ENCODE measurements at regions of chr13 and their contacts with region 1.

Region 1: DNA sequence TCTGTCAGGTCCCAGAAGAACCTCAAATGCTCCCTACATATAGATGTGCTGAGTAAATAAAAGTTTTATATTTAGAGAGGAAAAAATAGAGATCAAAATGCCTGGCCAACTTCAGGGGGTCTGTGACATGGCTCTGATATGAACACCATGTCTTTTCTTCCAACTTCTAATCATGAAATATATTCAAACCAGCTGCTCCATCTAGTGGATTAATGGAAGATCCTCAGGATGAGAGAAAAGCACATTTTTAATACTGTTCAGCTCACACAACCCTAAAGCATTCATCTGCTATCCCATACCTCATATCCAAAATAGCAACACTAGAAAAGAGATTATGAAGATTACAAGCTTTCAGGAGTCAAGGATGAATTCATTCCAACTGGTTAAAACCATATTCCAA is 56.0 kb upstream of the DOCK9 start:
- DNase-seq: no peak
- ATAC-seq: peak; percentile 63 to 80 (median 68)
- H3K4me3 ChIP-seq: no peak overlapping the region
- H3K27ac ChIP-seq: peak overlapping the region in 1 of 12 donors; percentile 12
- H3K4me1 ChIP-seq: peaks cover 0 to 20% (median 0%) of the 10 kb centered on the region in 12 donors
- H3K27me3 ChIP-seq: peaks cover 0 to 37% (median 0%) of the 10 kb centered on the region in 9 donors
- CTCF ChIP-seq: peak; percentile 43 to 75 (median 64)
- POLR2A ChIP-seq: no peak

Region 2: DNA sequence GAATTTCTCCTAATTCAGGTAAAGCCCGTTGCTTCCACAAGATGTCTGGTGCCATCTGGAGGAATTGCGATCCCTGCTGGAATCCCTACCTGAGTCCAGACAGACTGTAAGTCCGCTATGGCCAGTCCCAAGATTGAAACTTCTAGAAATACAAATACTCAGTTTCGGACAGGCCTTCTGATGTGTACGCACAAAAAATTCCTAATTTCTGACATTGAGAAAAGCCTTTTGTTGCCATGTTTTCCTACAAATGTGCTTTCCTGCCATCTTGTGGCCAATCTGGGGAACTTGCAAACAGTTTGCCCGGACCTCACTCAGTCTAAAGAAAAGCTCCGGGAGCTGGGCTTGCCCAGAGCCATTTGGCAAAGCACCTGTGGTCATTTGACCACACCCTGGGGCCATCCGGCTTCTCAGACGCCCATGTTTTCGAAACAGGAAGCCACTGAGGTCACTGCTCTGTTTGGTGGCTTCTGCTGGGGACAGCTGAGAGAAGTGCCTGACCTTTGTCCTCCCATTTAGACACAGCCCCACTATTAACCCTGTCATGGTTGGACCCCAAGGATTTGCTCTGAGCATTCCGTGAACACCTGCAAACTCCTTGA is 360.8 kb before region 1 on chr13:
- intact Hi-C with region 1: loop called in 1 of 10 experiments (anchors 5 kb)
- DNase-seq: peak; percentile 66 to 74 (median 70)
- ATAC-seq: peak; percentile 66 to 96 (median 92)
- H3K4me3 ChIP-seq: peak overlapping the region in 1 of 12 donors; percentile 14
- H3K27ac ChIP-seq: peak overlapping the region in 1 of 12 donors; percentile 1
- H3K4me1 ChIP-seq: peaks cover 0 to 15% (median 7%) of the 10 kb centered on the region in 12 donors
- H3K27me3 ChIP-seq: no peaks in the 10 kb centered on the region
- CTCF ChIP-seq: peak; percentile 82 to 96 (median 88)
- POLR2A ChIP-seq: no peak

Region 3: DNA sequence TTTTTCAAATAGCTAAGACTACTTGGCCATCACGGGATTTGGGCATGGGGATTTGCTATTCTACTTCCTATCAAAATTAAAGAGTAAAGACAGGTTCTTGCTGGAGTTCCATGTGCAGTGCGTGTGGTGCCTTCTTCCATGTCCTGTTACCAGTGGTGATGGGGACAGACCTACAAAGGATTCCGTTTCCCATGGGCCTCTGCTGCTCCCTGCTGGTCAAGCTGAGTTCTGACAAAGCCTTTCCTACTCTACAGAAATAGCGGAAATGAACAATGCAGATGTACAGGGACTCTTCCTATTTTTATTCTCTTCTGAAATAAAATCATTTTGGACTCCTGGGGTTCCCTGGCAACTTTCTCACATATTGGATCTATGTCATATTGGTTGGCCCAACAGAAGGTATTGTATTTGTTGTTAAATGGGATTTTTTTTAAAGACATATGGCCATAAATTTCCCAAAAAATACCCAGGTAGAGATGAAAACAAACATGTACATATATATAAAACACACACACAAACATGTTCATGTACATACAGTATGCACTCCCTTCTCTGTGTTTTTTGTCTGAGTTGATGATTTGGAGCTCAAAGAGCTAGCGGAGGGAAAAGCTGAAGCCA is 190.8 kb before region 1 on chr13:
- intact Hi-C with region 1: loop called in 9 of 10 experiments (anchors 5 to 10 kb)
- DNase-seq: peak; percentile 65 to 82 (median 72)
- ATAC-seq: peak; percentile 75 to 87 (median 84)
- H3K4me3 ChIP-seq: no peak overlapping the region
- H3K27ac ChIP-seq: no peak overlapping the region
- H3K4me1 ChIP-seq: peaks cover 0 to 14% (median 0%) of the 10 kb centered on the region in 12 donors
- H3K27me3 ChIP-seq: no peaks in the 10 kb centered on the region
- CTCF ChIP-seq: peak; percentile 79 to 90 (median 83)
- POLR2A ChIP-seq: no peak

Region 4: GRCh38 chr13:98869408-98870090 is 164.3 kb before region 1 on chr13:
- intact Hi-C with region 1: loop called in 1 of 10 experiments (anchors 10 kb)
- DNase-seq: peak in 4 of 5 donors; percentile 29 to 40 (median 33)
- ATAC-seq: peak in 3 of 4 donors; percentile 64 to 68 (median 65)
- H3K4me3 ChIP-seq: no peak overlapping the region
- H3K27ac ChIP-seq: no peak overlapping the region
- H3K4me1 ChIP-seq: peaks cover 0 to 5% (median 0%) of the 10 kb centered on the region in 12 donors
- H3K27me3 ChIP-seq: no peaks in the 10 kb centered on the region
- CTCF ChIP-seq: peak in 5 of 12 donors; percentile 7 to 29 (median 22)
- POLR2A ChIP-seq: no peak

Region 5: DNA sequence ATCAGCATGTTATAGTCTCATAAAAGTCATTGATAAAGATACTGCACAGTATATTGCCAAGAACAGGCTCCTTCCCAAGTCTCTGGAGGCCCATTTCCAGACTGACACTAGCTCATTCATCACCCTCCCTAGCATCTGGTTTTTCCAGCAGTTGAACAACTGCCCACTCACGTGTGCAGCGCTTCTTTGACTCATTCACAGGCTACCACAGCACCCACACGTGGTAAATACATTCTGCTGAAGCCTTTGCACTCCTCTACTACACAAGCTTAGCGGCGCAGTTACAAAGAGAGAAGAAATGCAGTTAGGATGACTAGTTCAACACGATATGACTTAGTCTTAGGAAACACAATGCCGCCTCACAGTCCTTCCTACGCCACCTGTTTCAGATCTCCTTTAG is 143.6 kb before region 1 on chr13:
- intact Hi-C with region 1: loop called in 8 of 10 experiments (anchors 2 to 10 kb)
- DNase-seq: peak in 1 of 5 donors; percentile 33
- ATAC-seq: peak; percentile 28 to 88 (median 68)
- H3K4me3 ChIP-seq: no peak overlapping the region
- H3K27ac ChIP-seq: peak overlapping the region in 1 of 12 donors; percentile 34
- H3K4me1 ChIP-seq: peaks cover 0 to 25% (median 11%) of the 10 kb centered on the region in 12 donors
- H3K27me3 ChIP-seq: no peaks in the 10 kb centered on the region
- CTCF ChIP-seq: no peak
- POLR2A ChIP-seq: no peak

Region 6: DNA sequence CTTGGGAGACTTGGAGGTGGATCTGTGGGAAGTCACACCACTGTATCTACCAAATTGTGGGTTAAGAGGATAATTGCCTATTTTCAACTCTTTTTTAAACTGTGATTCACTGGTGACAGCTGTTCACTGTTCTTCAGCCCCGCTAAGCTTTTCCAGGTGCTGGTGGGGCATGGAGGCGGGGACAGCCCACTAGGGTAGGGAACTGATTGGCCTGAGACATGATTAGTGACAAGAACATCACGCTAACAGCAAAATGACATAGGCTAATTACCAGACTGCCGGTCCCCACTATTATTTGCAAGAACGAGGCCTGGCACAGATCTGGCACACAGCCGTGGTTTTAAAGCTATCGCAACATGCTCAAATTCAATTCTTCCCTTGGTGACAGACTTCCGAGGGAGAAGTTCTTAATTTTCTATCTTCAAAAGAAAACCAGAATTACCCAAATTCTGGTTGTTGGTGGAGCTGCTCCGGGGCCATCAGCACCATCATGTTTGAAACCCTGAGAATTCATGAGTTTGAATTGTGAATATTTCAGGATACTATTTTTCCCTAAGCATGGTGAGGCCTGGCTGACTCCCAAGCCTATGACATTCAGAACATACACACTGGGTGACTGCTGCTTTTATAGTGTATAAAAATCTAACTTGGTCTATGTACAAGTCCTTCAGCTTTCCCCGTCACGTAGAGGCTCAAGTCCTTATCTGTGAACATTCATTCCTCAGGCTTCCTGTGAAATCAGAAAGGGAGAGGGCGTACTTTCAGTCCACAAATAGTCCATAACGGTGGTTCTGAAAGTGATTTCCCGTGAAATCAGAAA is 73.8 kb before region 1 on chr13:
- intact Hi-C with region 1: no loop called
- DNase-seq: no peak
- ATAC-seq: peak; percentile 49 to 80 (median 58)
- H3K4me3 ChIP-seq: no peak overlapping the region
- H3K27ac ChIP-seq: peak overlapping the region; percentile 32 to 80 (median 65)
- H3K4me1 ChIP-seq: peaks cover 21 to 71% (median 56%) of the 10 kb centered on the region in 12 donors
- H3K27me3 ChIP-seq: no peaks in the 10 kb centered on the region
- CTCF ChIP-seq: peak in 2 of 12 donors; percentile 12 to 17
- POLR2A ChIP-seq: no peak

Region 7: GRCh38 chr13:98977568-98978265 is 56.1 kb before region 1 on chr13 and contains the start of gene DOCK9:
- intact Hi-C with region 1: loop called in 4 of 10 experiments (anchors 2 to 5 kb)
- DNase-seq: peak; percentile 74 to 81 (median 78)
- ATAC-seq: peak; percentile 93 to 98 (median 96)
- H3K4me3 ChIP-seq: peak within 1 kb of the TSS; percentile 18 to 76 (median 57)
- H3K27ac ChIP-seq: peak within 1 kb of the TSS; percentile 50 to 84 (median 74)
- H3K4me1 ChIP-seq: peaks cover 0 to 71% (median 27%) of the 10 kb centered on the region in 12 donors
- H3K27me3 ChIP-seq: peaks cover 0 to 13% (median 0%) of the 10 kb centered on the region in 9 donors
- CTCF ChIP-seq: no peak
- POLR2A ChIP-seq: peak in 1 of 2 donors; percentile 84
- total RNA-seq, gene DOCK9: 35.0 to 128 (median 45.2) TPM

Region 8: GRCh38 chr13:99087096-99087953 is 53.5 kb after region 1 on chr13:
- intact Hi-C with region 1: no loop called
- DNase-seq: peak; percentile 92 to 95 (median 92)
- ATAC-seq: peak; percentile 95 to 99 (median 98)
- H3K4me3 ChIP-seq: peak overlapping the region; percentile 72 to 93 (median 87)
- H3K27ac ChIP-seq: peak overlapping the region; percentile 78 to 97 (median 94)
- H3K4me1 ChIP-seq: peaks cover 0 to 36% (median 13%) of the 10 kb centered on the region in 12 donors
- H3K27me3 ChIP-seq: peaks cover 0 to 59% (median 0%) of the 10 kb centered on the region in 9 donors
- CTCF ChIP-seq: peak in 7 of 12 donors; percentile 16 to 50 (median 31)
- POLR2A ChIP-seq: peak; percentile 22 to 83